IMR-90 (cell line): ENCODE measurements at regions of chr13 and their contacts with region 1.

Region 1: GRCh38 chr13:79480954-79481684 is at the start of gene NDFIP2:
- DNase-seq: peak; percentile 80
- ATAC-seq: peak; percentile 90
- H3K4me3 ChIP-seq: peak within 1 kb of the TSS; percentile 68
- H3K27ac ChIP-seq: peak within 1 kb of the TSS; percentile 11
- H3K4me1 ChIP-seq: no peaks in the 10 kb centered on the region
- H3K27me3 ChIP-seq: peaks cover 8% of the 10 kb centered on the region
- CTCF ChIP-seq: no peak
- POLR2A ChIP-seq: peak; percentile 75
- RAD21 ChIP-seq: no peak
- total RNA-seq, gene NDFIP2: 25.8 and 48.9 TPM in 2 replicates

Region 2: DNA sequence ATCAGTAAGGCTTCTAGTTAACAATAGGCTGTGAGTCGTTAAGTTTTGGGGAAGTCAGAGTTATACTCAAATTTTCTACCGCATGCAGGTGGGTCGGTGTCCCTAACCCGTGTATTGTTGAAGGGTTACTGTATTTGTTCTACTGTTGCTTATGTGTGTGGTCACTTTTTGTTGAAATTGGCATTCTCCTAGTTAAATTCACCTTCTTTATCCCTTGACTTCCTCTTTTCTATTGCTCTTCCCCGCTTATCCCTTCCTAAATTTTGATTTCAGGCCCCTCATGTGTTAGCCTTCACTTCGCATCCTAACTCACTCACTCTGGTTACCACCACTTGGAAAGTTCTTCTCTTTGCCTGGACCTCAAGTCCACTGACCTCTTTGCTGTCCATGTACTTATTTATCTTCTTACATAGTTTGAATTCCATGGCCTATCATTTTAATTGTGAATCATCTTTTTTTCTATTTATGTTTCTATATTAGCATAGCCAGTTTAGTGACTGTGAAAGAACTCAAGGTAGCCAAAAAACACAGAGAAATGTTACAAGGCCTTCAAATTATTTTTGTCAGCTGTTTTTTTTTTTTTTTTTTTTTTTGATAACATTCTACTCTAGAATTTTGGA is 52.8 kb after region 1 on chr13:
- CTCF ChIA-PET with region 1: interaction called, 3 read pairs
- POLR2A ChIA-PET with region 1: no interaction called
- dilution Hi-C with region 1: no loop called
- in situ Hi-C with region 1: no loop called
- intact Hi-C with region 1: loop called (anchors 5 kb)
- DNase-seq: peak; percentile 47
- ATAC-seq: peak; percentile 83
- H3K4me3 ChIP-seq: no peak overlapping the region
- H3K27ac ChIP-seq: no peak overlapping the region
- H3K4me1 ChIP-seq: peaks cover 6% of the 10 kb centered on the region; the same call in 1 of the 2 replicates
- H3K27me3 ChIP-seq: no peaks in the 10 kb centered on the region
- CTCF ChIP-seq: no peak
- POLR2A ChIP-seq: no peak
- RAD21 ChIP-seq: no peak

Region 3: GRCh38 chr13:80141123-80141849 is 660.2 kb after region 1 on chr13:
- CTCF ChIA-PET with region 1: no interaction called
- POLR2A ChIA-PET with region 1: interaction called, 11 read pairs
- dilution Hi-C with region 1: no loop called
- in situ Hi-C with region 1: no loop called
- intact Hi-C with region 1: no loop called
- DNase-seq: peak; percentile 78
- ATAC-seq: peak; percentile 93
- H3K4me3 ChIP-seq: no peak overlapping the region
- H3K27ac ChIP-seq: peak overlapping the region; percentile 16; the same call in 1 of the 2 replicates
- H3K4me1 ChIP-seq: peaks cover 3% of the 10 kb centered on the region; the same call in 1 of the 2 replicates
- H3K27me3 ChIP-seq: no peaks in the 10 kb centered on the region
- CTCF ChIP-seq: no peak
- POLR2A ChIP-seq: no peak
- RAD21 ChIP-seq: 0 out of 2 replicates have a peak, but pooled peaks have one; percentile 21